PC-9 (cell line): ENCODE measurements at regions of chr11 and their contacts with region 1.

Region 1: DNA sequence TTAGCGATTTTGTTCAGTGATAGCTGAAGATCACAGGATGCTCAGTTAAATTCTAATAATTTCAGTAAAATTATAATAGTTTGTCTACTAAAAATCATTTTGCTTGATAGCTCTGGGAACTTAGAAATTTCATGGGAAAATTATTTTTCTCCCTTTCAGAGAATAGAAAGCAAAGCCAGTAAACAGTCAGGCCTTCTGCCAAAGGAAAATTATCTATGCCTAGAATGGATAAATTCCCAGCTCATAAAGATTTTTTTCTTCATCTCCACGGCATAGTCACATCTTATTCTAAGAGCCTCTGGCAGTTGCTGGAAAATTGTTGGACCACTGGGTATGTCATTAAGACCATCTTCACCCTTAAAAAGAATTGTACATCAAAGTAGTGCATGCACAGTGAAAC is 169.6 kb upstream of the ANO3 start:
- DNase-seq: no peak
- H3K4me3 ChIP-seq: no peak overlapping the region
- H3K27ac ChIP-seq: no peak overlapping the region
- H3K4me1 ChIP-seq: no peaks in the 10 kb centered on the region
- H3K27me3 ChIP-seq: no peaks in the 10 kb centered on the region
- CTCF ChIP-seq: no peak

Region 2: GRCh38 chr11:26201411-26201810 is 39.1 kb after region 1 on chr11:
- CTCF ChIA-PET with region 1: no interaction called
- POLR2A ChIA-PET with region 1: no interaction called
- intact Hi-C with region 1: no loop called
- DNase-seq: no peak
- H3K4me3 ChIP-seq: no peak overlapping the region
- H3K27ac ChIP-seq: no peak overlapping the region
- H3K4me1 ChIP-seq: no peaks in the 10 kb centered on the region
- H3K27me3 ChIP-seq: no peaks in the 10 kb centered on the region
- CTCF ChIP-seq: no peak

Region 3: DNA sequence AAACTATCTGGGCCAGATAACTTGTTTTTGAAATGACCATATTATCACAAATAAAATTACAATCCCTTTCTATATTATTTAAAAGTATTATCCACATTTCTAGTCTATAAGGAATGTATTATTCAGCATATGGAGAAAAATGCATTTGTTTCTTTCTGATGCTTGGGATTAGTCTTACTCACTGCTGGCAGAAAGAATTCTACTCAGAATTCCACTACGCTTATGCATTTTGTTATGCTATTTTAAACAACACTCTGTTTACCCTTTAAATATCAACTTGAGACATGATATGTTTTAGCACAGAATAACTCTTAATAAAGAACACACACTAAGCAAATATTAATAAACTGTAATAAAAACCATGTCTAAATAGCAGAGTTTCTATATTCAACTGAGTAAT is 92.1 kb after region 1 on chr11:
- CTCF ChIA-PET with region 1: no interaction called
- POLR2A ChIA-PET with region 1: interaction called, 19 read pairs
- intact Hi-C with region 1: no loop called
- DNase-seq: no peak
- H3K4me3 ChIP-seq: no peak overlapping the region
- H3K27ac ChIP-seq: no peak overlapping the region
- H3K4me1 ChIP-seq: no peaks in the 10 kb centered on the region
- H3K27me3 ChIP-seq: 0 out of 2 replicates have a peak, but pooled peaks cover 2% of the 10 kb centered on the region
- CTCF ChIP-seq: no peak